Right ventricle myocardium inferior (tissue), 1 donor: ENCODE measurements at regions of chr5 and their contacts with region 1.

Region 1: DNA sequence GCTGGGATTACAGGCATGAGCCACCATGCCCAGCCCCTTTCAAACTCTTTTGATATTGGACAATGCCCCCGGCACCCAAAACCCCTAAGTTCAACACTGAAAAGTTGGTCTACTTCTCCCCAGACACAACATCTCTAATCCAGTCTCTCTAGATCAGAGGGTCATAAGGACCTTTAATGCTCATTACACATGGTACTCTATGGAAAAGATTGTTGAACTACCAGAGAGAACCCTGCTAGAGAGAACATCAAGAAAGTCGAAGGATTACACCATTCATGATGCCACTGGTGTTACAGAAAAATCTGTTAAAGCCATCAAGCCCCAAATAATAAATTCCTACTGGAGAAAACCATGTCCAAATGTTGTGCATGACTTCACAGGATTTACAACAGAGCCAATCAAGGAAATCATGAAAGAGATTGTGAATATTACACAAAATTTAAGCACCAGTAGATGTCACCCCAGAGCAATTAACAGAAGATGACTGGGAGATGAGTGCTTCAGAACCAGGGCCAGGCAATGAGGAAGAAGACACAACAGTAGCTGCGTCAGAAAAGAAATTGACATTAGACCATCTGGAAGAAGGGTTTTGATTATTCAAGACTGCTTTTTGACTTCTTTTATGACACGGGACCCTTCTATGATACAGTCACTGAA is 28.3 kb upstream of the NIPAL4 start:
- DNase-seq: no peak
- ATAC-seq: peak; percentile 76

Region 2: DNA sequence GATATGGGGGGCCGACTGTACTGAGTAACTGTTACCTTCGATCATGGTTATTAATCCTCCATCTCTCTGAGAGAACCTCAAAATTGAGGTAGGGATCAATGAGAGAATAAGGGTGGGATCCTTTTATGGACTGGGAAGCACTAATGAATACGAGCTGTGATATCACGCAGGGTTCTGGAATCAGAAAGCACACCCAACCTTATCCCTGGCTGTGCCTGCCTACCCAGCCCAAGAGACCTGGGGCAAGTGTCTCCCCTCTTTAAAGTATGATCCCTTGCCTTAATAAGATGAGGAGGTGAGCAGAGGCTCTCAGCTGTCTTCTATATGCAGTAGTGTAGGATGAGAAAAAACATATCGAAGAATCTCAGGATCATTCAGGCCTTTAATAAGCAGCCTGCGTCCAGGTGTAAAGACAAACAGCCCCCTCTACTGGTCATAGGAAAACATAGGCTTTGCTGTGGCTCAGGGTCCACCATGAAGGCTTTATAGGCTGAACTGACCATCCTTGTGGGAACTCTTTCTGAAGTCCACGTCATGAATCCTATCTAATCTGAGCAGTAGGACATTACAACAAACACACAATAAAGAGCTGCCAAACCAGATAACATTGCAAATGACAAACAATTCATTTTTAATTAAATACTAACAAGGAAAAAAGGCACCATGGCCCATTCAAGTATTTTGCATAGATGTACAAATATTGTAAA is 45.2 kb after region 1 on chr5:
- intact Hi-C with region 1: loop called (anchors 2 kb)
- DNase-seq: no peak
- ATAC-seq: peak; percentile 69

Region 3: GRCh38 chr5:157718519-157718918 is 286.8 kb after region 1 on chr5:
- intact Hi-C with region 1: loop called (anchors 2 kb)
- DNase-seq: no peak
- ATAC-seq: peak; percentile 89